ENCODE measurements at regions of chr1 and their contacts with region 1.

Region 1: GRCh38 chr1:152189657-152190442 is 30.8 kb upstream of the RPTN start:
- DNase-seq: no peak
- H3K4me3 ChIP-seq: peak overlapping the region; percentile 54 to 55
- H3K27ac ChIP-seq: no peak overlapping the region
- H3K4me1 ChIP-seq: peaks cover 12% of the 10 kb centered on the region
- H3K27me3 ChIP-seq: no peaks in the 10 kb centered on the region
- CTCF ChIP-seq: peak; percentile 47 to 64 (median 57)
- POLR2A ChIP-seq: no peak

Region 2: GRCh38 chr1:152052606-152053005 is 137.2 kb before region 1 on chr1:
- intact Hi-C with region 1: loop called (anchors 10 kb)
- DNase-seq: no peak
- H3K4me3 ChIP-seq: no peak overlapping the region
- H3K27ac ChIP-seq: no peak overlapping the region
- H3K4me1 ChIP-seq: peaks cover 25% of the 10 kb centered on the region
- H3K27me3 ChIP-seq: no peaks in the 10 kb centered on the region
- CTCF ChIP-seq: peak; percentile 89 to 94 (median 90)
- POLR2A ChIP-seq: no peak

Measured in vagina (tissue), 2 donors.